Heart left ventricle (tissue), 16 donors: ENCODE measurements at regions of chr12 and their contacts with region 1.

Region 1: DNA sequence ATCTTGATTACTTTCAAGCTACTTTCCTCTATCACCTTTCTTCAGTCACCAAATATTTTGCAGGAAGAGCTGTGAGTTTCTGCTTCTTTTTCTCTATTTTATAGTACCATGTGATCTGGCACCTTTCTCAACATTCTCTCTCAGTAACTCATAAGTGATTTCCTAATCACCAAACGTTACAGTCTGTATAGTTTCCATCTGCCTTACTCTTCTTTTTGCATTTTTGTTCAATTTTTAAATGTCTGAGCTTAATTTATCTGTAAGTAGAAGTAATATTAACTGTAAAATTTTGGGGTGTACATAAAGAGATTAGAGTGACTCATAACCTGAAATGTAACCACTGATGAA is 422.1 kb upstream of the SYT1 start:
- DNase-seq: no peak
- ATAC-seq: no peak
- H3K4me3 ChIP-seq: no peak overlapping the region
- H3K27ac ChIP-seq: no peak overlapping the region
- H3K4me1 ChIP-seq: no peaks in the 10 kb centered on the region
- H3K27me3 ChIP-seq: no peaks in the 10 kb centered on the region
- CTCF ChIP-seq: no peak
- POLR2A ChIP-seq: no peak

Region 2: DNA sequence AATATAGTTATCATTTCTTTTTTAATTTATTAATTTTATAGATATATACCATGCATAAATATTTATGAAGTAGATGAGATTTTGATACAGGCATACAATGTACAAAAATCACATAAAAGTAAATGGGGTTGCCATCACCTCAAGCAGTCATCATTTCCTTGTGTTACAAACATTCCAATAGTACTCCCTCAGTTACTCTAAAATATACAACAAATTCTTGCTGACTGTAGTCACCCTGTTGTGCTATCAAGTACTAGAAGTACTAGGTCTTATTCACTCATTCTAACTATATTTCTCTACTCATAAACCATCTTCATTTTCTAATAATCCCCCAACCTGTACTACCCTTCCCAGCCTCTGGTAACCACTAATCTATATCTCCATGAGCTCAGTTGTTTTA is 10.5 kb before region 1 on chr12:
- intact Hi-C with region 1: loop called in 1 of 10 experiments (anchors 1 kb)
- DNase-seq: no peak
- ATAC-seq: no peak
- H3K4me3 ChIP-seq: no peak overlapping the region
- H3K27ac ChIP-seq: no peak overlapping the region
- H3K4me1 ChIP-seq: no peaks in the 10 kb centered on the region
- H3K27me3 ChIP-seq: no peaks in the 10 kb centered on the region
- CTCF ChIP-seq: no peak
- POLR2A ChIP-seq: no peak